Activated T-helper 2 cell treated with anti-CD3 and anti-CD28 coated beads, Interferon-gamma antibody, Interleukin-2, Interleukin-4, amounts not matched to agents 10 μg/mL and 5 μg/mL and 100 μg/mL, durations not matched to agents 14 hours and 24 hours and 36 hours (primary cell): ENCODE measurements at regions of chr5 and their contacts with region 1.

Region 1: DNA sequence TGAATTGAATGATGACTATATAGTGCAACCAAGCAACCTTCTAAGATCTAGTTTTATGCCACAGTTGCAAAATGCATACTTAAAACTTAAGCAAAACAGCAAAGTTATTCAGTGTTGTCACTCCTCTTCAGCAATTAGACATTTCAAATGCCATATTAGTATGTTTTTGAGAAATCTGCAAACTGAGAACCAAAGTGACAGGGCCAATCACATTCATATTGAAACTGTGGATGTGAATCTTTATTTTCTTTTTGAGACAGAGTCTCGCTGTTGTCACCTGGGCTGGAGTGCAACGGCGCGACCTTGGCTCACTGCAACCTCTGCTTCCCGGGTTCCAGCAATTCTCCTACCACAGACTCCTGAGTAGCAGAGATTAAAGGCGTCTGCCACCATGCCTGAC is 249.2 kb upstream of the EFNA5 start:
- DNase-seq: no peak
- H3K4me3 Mint-ChIP-seq: peak overlapping the region; percentile 38
- H3K27ac Mint-ChIP-seq: peak overlapping the region; percentile 75
- H3K4me1 Mint-ChIP-seq: peaks cover 71% of the 10 kb centered on the region
- H3K27me3 Mint-ChIP-seq: no peaks in the 10 kb centered on the region

Region 2: GRCh38 chr5:107673368-107674136 is 246.4 kb before region 1 on chr5:
- intact Hi-C with region 1: loop called (anchors 5 kb)
- DNase-seq: peak; percentile 59
- H3K4me3 Mint-ChIP-seq: peak overlapping the region; percentile 70
- H3K27ac Mint-ChIP-seq: no peak overlapping the region
- H3K4me1 Mint-ChIP-seq: peaks cover 26% of the 10 kb centered on the region
- H3K27me3 Mint-ChIP-seq: peaks cover 62% of the 10 kb centered on the region

Region 3: DNA sequence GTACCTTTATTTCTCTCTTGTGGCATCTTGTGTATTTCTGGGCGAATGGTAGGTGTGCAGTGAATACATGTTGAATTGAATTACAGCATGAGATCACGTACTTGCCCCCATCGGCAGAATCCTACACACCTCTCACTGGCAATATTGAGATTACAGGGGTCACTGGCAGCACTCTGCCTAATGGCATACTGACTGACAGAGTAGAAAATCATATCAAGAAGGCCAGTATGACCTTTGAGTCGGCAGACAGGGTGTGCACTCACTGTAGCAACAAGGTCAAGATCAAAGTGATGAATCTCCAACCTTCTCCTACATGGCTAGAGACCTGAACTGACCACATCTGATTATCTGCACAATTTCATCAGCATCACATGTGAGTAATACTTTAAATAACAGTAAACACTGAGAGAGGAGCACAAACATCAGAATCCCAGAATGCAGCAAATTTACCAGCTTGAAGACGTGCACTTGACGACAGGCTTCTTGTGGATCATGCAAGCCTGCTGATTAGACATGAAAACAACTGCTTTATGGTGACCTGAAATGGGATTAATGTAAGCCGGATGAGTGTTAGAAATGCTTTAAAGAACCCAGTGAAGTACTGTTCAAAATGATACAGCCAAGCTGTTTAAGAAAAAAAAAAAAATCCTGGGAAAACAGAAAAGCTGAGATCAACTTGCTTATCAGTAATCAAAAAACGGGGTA is 17.8 kb after region 1 on chr5:
- intact Hi-C with region 1: loop called (anchors 2 kb)
- DNase-seq: no peak
- H3K4me3 Mint-ChIP-seq: no peak overlapping the region
- H3K27ac Mint-ChIP-seq: no peak overlapping the region
- H3K4me1 Mint-ChIP-seq: peaks cover 8% of the 10 kb centered on the region
- H3K27me3 Mint-ChIP-seq: no peaks in the 10 kb centered on the region

Region 4: DNA sequence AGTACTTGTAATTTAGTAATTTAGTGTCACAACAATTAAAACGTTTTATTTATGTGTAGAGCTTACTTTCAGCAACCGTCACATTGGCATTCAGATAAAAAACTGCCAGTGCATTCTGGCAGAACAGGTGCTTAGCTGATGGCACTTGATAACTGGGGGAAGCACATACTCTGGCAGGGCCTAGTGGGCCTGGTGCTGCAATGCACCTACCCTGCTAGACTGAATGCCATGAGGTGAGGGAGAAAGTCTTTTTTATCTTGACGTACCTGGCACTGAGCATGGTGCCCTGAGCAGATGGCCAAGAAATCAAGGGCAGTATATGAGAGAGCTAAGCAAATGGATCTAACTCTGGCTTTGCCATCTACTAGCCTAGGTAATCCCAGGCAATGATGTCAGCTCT is 31.3 kb after region 1 on chr5:
- intact Hi-C with region 1: loop called (anchors 5 kb)
- DNase-seq: no peak
- H3K4me3 Mint-ChIP-seq: no peak overlapping the region
- H3K27ac Mint-ChIP-seq: no peak overlapping the region
- H3K4me1 Mint-ChIP-seq: peaks cover 26% of the 10 kb centered on the region
- H3K27me3 Mint-ChIP-seq: no peaks in the 10 kb centered on the region

Region 5: GRCh38 chr5:107979900-107980299 is 59.9 kb after region 1 on chr5:
- intact Hi-C with region 1: loop called (anchors 5 kb)
- DNase-seq: no peak
- H3K4me3 Mint-ChIP-seq: no peak overlapping the region
- H3K27ac Mint-ChIP-seq: no peak overlapping the region
- H3K4me1 Mint-ChIP-seq: peaks cover 47% of the 10 kb centered on the region
- H3K27me3 Mint-ChIP-seq: no peaks in the 10 kb centered on the region

Region 6: DNA sequence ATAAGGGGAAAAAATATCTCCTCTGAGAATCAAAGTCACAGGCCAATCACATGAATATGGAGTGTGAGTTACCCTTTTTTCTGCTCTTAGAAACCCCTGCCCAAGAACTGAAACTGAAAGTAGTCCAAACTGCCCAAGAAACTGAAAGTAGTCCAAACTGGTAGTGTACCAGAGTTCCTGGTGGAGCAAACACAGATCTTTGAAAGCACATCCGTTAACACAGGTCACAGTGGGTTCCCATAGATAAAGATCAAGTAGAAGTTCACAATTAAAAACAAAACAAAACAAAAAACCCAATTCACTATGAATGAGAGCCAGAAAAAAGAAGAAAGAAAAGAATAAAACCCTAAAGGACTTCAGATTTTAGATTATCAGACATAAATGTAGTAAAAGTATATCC is 83.2 kb after region 1 on chr5:
- intact Hi-C with region 1: loop called (anchors 2 kb)
- DNase-seq: peak; percentile 27
- H3K4me3 Mint-ChIP-seq: peak overlapping the region; percentile 10
- H3K27ac Mint-ChIP-seq: peak overlapping the region; percentile 66
- H3K4me1 Mint-ChIP-seq: peaks cover 17% of the 10 kb centered on the region
- H3K27me3 Mint-ChIP-seq: no peaks in the 10 kb centered on the region

Region 7: GRCh38 chr5:108167174-108167573 is 247.2 kb after region 1 on chr5:
- intact Hi-C with region 1: no loop called
- DNase-seq: no peak
- H3K4me3 Mint-ChIP-seq: no peak overlapping the region
- H3K27ac Mint-ChIP-seq: no peak overlapping the region
- H3K4me1 Mint-ChIP-seq: no peaks in the 10 kb centered on the region
- H3K27me3 Mint-ChIP-seq: no peaks in the 10 kb centered on the region

Region 8: GRCh38 chr5:108381954-108382783 is 462.2 kb after region 1 on chr5 and contains the start of gene FBXL17:
- intact Hi-C with region 1: loop called (anchors 5 kb)
- DNase-seq: peak; percentile 89
- H3K4me3 Mint-ChIP-seq: peak within 1 kb of the TSS; percentile 80
- H3K27ac Mint-ChIP-seq: peak within 1 kb of the TSS; percentile 83
- H3K4me1 Mint-ChIP-seq: peaks cover 27% of the 10 kb centered on the region
- H3K27me3 Mint-ChIP-seq: no peaks in the 10 kb centered on the region
- total RNA-seq, gene FBXL17: 7.0 and 9.3 TPM in 2 replicates